ENCODE measurements at regions of chr12 and their contacts with region 1.

Region 1: GRCh38 chr12:14239350-14239934 is 126.0 kb upstream of the ATF7IP start:
- DNase-seq: no peak
- ATAC-seq: peak; percentile 67; the same call in 1 of the 2 replicates
- H3K4me3 ChIP-seq: no peak overlapping the region
- H3K27ac ChIP-seq: no peak overlapping the region
- H3K4me1 ChIP-seq: no peaks in the 10 kb centered on the region; a peak in 1 of 4 replicates
- H3K27me3 ChIP-seq: no peaks in the 10 kb centered on the region
- CTCF ChIP-seq: no peak
- POLR2A ChIP-seq: no peak
- RAD21 ChIP-seq: no peak

Region 2: DNA sequence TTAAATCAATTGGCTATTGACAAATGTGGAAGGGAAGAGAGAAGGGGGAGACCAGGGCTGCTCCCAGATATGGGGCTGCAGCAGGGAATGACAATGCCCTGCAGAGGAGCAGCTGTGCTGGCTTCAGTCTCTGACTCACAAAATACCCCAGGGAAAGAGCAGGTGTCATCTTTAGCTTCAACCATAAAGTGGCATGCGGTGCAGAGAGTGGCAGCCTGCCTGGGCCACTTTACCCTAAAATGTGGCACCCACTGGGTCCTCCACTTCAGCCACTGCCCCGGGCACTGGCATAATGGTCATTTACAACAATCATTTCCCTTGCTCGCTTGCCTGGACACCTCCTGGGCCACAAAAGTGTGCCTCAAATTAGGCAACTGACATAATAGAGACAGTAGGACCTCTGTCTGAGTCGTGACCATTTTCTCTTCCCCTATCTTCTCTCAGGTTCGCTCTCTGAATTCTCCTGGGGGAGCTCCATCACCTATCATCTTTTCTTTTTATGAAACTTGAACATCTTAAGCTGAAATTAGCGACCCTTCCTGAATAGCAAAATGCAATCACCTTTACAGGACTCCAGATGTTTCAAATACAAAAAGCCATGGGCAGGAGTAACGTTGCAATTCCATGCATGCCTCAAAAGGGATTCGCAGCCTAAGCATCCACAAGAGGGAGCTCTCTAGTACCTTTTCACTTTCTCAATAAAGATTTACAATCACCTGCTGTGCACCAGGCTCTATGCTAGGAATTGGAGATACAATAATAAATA is 53.8 kb before region 1 on chr12:
- CTCF ChIA-PET with region 1: interaction called, 12 read pairs
- POLR2A ChIA-PET with region 1: no interaction called
- RAD21 ChIA-PET with region 1: interaction called in 1 of 2 experiments, 4 read pairs
- intact Hi-C with region 1: no loop called
- DNase-seq: peak; percentile 39
- ATAC-seq: peak; percentile 88
- H3K4me3 ChIP-seq: no peak overlapping the region
- H3K27ac ChIP-seq: no peak overlapping the region
- H3K4me1 ChIP-seq: no peaks in the 10 kb centered on the region
- H3K27me3 ChIP-seq: no peaks in the 10 kb centered on the region
- CTCF ChIP-seq: peak; percentile 64 to 78 (median 75); a peak in 5 of 6 replicates
- POLR2A ChIP-seq: no peak
- RAD21 ChIP-seq: peak; percentile 83

Region 3: GRCh38 chr12:14417715-14418114 is 178.3 kb after region 1 on chr12:
- CTCF ChIA-PET with region 1: interaction called, 21 read pairs
- POLR2A ChIA-PET with region 1: no interaction called
- RAD21 ChIA-PET with region 1: no interaction called
- intact Hi-C with region 1: no loop called
- DNase-seq: no peak
- ATAC-seq: peak; percentile 49; the same call in 1 of the 2 replicates
- H3K4me3 ChIP-seq: no peak overlapping the region
- H3K27ac ChIP-seq: no peak overlapping the region
- H3K4me1 ChIP-seq: peaks cover 0 to 19% of the 10 kb centered on the region in 2 experiments; a peak in 2 of 4 replicates
- H3K27me3 ChIP-seq: no peaks in the 10 kb centered on the region
- CTCF ChIP-seq: no peak
- POLR2A ChIP-seq: no peak
- RAD21 ChIP-seq: no peak

Region 4: GRCh38 chr12:14514154-14514842 is 274.9 kb after region 1 on chr12:
- CTCF ChIA-PET with region 1: interaction called, 7 read pairs
- POLR2A ChIA-PET with region 1: no interaction called
- RAD21 ChIA-PET with region 1: no interaction called
- intact Hi-C with region 1: loop called (anchors 5 kb)
- DNase-seq: peak; percentile 71
- ATAC-seq: peak; percentile 93
- H3K4me3 ChIP-seq: no peak overlapping the region
- H3K27ac ChIP-seq: no peak overlapping the region
- H3K4me1 ChIP-seq: peaks cover 9 to 12% of the 10 kb centered on the region in 2 experiments; a peak in 3 of 4 replicates
- H3K27me3 ChIP-seq: no peaks in the 10 kb centered on the region
- CTCF ChIP-seq: peak; percentile 56 to 74 (median 72); a peak in 5 of 6 replicates
- POLR2A ChIP-seq: no peak
- RAD21 ChIP-seq: peak; percentile 80

Region 5: GRCh38 chr12:14664510-14664909 is 425.1 kb after region 1 on chr12:
- CTCF ChIA-PET with region 1: interaction called, 6 read pairs
- POLR2A ChIA-PET with region 1: no interaction called
- RAD21 ChIA-PET with region 1: no interaction called
- intact Hi-C with region 1: loop called (anchors 1 kb)
- DNase-seq: peak; percentile 37
- ATAC-seq: peak; percentile 75
- H3K4me3 ChIP-seq: no peak overlapping the region
- H3K27ac ChIP-seq: no peak overlapping the region
- H3K4me1 ChIP-seq: no peaks in the 10 kb centered on the region
- H3K27me3 ChIP-seq: no peaks in the 10 kb centered on the region
- CTCF ChIP-seq: peak; percentile 42 to 78 (median 68); a peak in 5 of 6 replicates
- POLR2A ChIP-seq: no peak
- RAD21 ChIP-seq: peak; percentile 84

Measured in HCT116 (cell line).